ENCODE measurements at regions of chr1 and their contacts with region 1.

Region 1: DNA sequence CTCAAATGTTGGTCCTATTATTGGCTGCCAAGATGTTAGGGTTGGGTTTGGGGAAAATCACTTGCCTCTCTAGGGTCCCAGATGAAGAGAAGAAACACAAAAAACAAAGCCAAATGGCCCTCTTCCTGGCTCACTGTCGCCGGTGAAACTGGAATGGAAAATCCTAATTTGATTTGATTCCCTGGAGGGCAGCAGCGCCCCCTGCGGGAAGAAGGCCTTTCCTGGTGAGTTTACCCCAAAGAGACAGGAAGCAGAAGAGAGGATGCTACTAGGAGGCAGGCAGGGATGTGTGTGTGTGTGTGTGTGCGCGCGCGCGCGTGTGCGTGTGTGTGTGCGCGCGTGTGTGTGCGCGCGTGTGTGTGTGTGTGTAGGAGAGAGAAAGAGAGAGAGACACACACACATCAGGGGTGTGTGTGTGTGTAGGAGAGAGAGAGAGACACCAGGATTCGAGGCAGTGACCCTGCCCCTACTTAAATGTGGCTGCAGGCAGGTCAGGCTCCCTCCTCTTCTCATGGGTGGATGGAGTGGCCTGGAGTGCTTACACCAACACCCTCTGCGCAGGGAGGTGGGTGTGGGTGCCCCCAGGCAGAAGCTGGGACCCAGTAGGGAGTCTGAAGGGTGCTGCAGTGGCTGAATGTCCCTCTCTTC is 3.1 kb upstream of the SELENON start:
- ATAC-seq: peak in 3 of 8 experiments; percentile 18 to 32 (median 21)
- H3K4me3 ChIP-seq: no peak overlapping the region
- H3K27ac ChIP-seq: no peak overlapping the region
- H3K4me1 ChIP-seq: peaks cover 14 to 18% of the 10 kb centered on the region in 2 donors

Region 2: GRCh38 chr1:25487628-25488027 is 309.3 kb before region 1 on chr1:
- in situ Hi-C with region 1: no loop called
- ATAC-seq: no peak
- H3K4me3 ChIP-seq: no peak overlapping the region
- H3K27ac ChIP-seq: no peak overlapping the region
- H3K4me1 ChIP-seq: no peaks in the 10 kb centered on the region

Region 3: DNA sequence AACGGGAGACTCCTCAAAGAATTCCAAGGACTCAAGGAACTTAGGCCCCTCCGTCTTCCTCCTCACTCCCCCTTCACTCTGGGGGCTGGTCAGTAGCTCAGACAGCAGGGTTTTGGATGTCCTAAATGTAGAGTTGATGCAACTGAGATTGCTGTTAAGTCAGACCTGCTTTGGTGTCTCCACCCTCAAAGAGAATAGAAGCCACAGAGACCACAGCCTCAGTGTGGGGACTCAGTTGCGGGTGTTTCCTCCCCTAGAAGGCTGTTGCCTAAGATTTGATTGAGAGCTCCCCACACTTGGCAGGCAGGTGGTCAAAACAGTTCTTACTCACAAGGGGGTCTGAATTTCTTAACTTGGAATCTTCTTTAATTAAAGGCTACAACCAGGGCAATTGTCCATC is 172.8 kb before region 1 on chr1:
- in situ Hi-C with region 1: loop called (anchors 10 to 25 kb)
- ATAC-seq: no peak
- H3K4me3 ChIP-seq: no peak overlapping the region
- H3K27ac ChIP-seq: no peak overlapping the region
- H3K4me1 ChIP-seq: peaks cover 3 to 9% of the 10 kb centered on the region in 2 donors

Measured in motor neuron (in vitro differentiated cells).